Dorsolateral prefrontal cortex (tissue), 120 donors: ENCODE measurements at regions of chr2 and their contacts with region 1.

Region 1: DNA sequence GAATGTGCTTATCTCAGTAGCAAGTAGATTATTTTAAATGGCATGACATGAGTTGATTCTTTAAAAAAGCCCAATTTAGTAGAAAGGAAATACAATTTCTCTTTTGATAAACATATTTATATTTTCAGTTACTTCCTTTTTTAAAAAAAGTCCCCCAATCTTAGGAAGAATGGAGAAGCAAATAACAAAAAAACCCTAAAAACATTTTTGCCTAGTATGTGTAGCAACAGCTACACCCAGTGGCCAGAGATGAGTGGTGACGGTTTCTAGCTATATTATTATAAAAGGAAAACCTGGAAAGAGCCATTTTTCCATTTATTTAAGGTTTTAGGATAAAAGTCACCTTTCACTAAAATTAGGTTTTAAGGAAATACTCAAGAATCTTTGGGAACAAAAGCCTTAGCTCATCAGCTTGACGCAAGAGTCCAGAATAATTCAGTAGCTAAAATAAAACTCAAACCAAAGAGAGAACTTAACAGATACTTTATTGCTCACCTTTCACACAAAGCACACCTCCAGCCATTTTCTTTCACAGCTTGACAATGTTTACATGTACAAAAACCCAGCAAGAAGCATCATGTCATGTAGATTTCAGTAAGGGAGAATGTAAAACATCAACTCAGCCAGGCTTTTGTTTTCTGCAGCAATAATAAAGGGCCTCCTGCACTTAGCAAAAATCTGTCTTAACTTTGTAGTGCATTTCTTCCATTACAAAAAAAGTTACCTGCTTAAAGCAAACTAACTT is 15.7 kb downstream of the FAM98A start:
- DNase-seq: peak in 3 of 10 donors; percentile 26 to 65 (median 57)
- H3K4me3 ChIP-seq: no peak overlapping the region
- H3K27ac ChIP-seq: peak overlapping the region in 51 of 59 donors; percentile 4 to 96 (median 61)
- H3K27me3 ChIP-seq: no peaks in the 10 kb centered on the region
- CTCF ChIP-seq: peak; percentile 71 to 98 (median 88)

Region 2: DNA sequence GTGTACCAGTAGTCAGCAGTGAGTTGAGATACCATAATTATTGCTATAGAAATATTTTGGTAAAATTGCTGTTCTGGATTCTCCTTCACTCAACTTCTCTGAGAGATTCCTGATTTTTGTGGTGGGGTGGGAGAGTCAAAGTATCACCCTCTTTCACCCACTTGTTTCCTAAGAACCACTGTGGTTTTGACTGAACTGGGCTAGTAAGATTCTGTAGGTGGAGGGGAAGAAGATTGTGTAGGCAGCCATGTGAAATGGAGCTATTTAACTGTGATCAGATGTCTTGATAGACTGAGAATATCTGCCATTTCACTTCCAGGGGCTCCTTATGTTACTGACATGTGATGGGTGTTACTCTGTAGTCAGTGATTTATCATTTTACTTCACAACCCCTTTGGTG is 1181.3 kb before region 1 on chr2:
- intact Hi-C with region 1: no loop called
- DNase-seq: no peak
- H3K4me3 ChIP-seq: no peak overlapping the region
- H3K27ac ChIP-seq: no peak overlapping the region
- H3K27me3 ChIP-seq: no peaks in the 10 kb centered on the region
- CTCF ChIP-seq: no peak

Region 3: GRCh38 chr2:32772638-32773447 is 810.5 kb before region 1 on chr2:
- intact Hi-C with region 1: loop called (anchors 5 to 10 kb)
- DNase-seq: peak in 1 of 10 donors; percentile 16
- H3K4me3 ChIP-seq: no peak overlapping the region
- H3K27ac ChIP-seq: peak overlapping the region in 2 of 59 donors; percentile 24 to 32
- H3K27me3 ChIP-seq: no peaks in the 10 kb centered on the region
- CTCF ChIP-seq: peak; percentile 65 to 95 (median 85)

Region 4: DNA sequence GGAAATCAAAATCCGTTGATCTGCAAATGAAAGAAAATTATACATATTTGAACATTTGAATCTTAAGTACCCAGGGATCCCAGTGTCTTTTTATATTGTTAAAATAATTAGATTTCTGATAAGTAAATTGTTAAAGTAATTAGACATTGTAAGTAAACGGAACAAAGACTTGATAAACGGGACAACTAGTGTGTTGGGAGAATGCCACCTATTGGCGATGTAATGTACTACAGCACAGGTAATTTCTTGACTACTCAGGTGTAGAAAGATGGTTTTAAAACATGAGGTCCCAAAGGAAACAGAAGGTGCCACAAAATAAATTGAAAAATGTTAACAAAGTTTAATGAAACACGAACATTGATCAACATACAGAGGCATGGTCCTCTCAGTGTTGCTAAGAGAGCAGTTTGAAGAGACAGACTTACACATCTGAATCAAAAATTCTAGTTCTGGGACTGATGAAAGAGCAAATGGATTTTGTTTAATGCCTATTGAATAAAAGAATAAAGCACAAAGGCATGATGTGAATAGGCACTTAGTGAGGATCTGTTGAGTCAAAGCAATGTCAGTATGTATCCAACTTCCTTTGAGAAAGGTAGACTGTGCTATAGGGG is 210.3 kb before region 1 on chr2:
- intact Hi-C with region 1: loop called in 1 of 2 experiments (anchors 10 kb)
- DNase-seq: no peak
- H3K4me3 ChIP-seq: peak overlapping the region in 3 of 59 donors; percentile 6 to 30 (median 22)
- H3K27ac ChIP-seq: peak overlapping the region in 10 of 59 donors; percentile 8 to 87 (median 80)
- H3K27me3 ChIP-seq: no peaks in the 10 kb centered on the region
- CTCF ChIP-seq: peak; percentile 58 to 87 (median 80)

Region 5: DNA sequence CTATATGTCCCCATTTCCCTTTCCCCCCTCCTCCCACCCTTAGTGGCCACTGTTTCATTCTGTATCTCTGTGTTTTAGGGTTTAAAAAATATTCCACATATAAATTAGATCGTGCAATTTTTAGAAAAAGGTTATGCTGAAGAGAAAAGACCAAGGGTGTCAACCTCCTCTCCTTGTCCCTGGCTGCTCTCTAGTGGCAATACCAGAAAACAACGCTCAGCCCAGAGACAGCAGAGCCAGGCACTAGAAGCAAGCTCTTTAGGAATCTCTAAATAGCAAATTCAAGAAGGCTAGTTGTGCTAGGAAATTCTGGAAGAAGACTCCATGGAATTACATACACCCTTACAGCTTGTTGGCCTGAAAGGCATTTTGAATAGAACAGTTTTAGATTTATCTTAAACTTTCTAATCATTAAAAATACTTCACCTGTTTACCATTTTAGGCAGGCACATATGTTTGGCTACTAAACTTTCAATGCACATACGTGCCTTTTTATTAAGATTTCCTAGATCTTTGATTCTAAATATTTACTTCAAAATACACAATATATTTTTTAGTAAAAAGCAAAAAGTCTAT is 142.0 kb before region 1 on chr2:
- intact Hi-C with region 1: loop called in 1 of 2 experiments (anchors 1 kb)
- DNase-seq: peak in 8 of 10 donors; percentile 56 to 77 (median 64)
- H3K4me3 ChIP-seq: no peak overlapping the region
- H3K27ac ChIP-seq: peak overlapping the region in 51 of 59 donors; percentile 3 to 93 (median 77)
- H3K27me3 ChIP-seq: no peaks in the 10 kb centered on the region
- CTCF ChIP-seq: peak in 55 of 56 donors; percentile 51 to 88 (median 72)